H1 (cell line): ENCODE measurements at regions of chr10 and their contacts with region 1.

Region 1: DNA sequence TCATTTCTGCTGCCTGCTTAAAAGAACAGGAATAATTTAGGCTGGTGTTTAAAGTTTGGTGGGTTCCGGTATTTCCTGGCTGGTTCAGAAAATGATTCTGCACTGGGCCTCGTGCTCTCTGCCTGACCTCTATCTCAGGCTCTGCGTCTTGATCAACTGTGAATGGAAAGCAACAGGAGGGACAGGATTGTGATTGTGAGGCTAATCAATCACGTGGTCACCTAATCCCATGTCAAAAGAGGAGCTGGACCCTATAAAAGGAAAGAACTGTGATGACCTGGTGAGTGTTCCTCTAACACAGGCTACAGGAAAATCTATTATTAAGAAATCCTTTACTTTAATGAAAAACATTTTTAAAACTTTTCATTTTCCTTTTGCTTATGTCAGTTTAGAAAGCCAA is at the start of gene DHX32:
- DNase-seq: no peak
- H3K4me3 ChIP-seq: peak within 1 kb of the TSS in 2 of 4 experiments; percentile 20 to 47; a peak in 4 of 8 replicates
- H3K27ac ChIP-seq: no peak within 1 kb of the TSS; the same call in 1 of the 2 replicates
- H3K4me1 ChIP-seq: peaks cover 2 to 19% (median 7%) of the 10 kb centered on the region in 4 experiments
- H3K27me3 ChIP-seq: no peaks in the 10 kb centered on the region; a peak in 1 of 7 replicates
- CTCF ChIP-seq: no peak
- EP300 ChIP-seq: peak in 1 of 2 experiments; percentile 57; a peak in 1 of 3 replicates
- POLR2A ChIP-seq: no peak
- RAD21 ChIP-seq: no peak
- total RNA-seq, gene DHX32: 15.6 and 15.8 TPM in 2 replicates

Region 2: GRCh38 chr10:125559210-125559609 is 322.0 kb before region 1 on chr10:
- CTCF ChIA-PET with region 1: no interaction called
- POLR2A ChIA-PET with region 1: no interaction called
- DNase-seq: no peak
- H3K4me3 ChIP-seq: no peak overlapping the region
- H3K27ac ChIP-seq: no peak overlapping the region
- H3K4me1 ChIP-seq: no peaks in the 10 kb centered on the region
- H3K27me3 ChIP-seq: no peaks in the 10 kb centered on the region
- CTCF ChIP-seq: no peak
- EP300 ChIP-seq: no peak
- POLR2A ChIP-seq: no peak
- RAD21 ChIP-seq: no peak

Region 3: GRCh38 chr10:125850766-125851731 is 30.1 kb before region 1 on chr10:
- CTCF ChIA-PET with region 1: no interaction called
- POLR2A ChIA-PET with region 1: no interaction called
- DNase-seq: no peak
- H3K4me3 ChIP-seq: no peak overlapping the region
- H3K27ac ChIP-seq: no peak overlapping the region
- H3K4me1 ChIP-seq: no peaks in the 10 kb centered on the region
- H3K27me3 ChIP-seq: no peaks in the 10 kb centered on the region
- CTCF ChIP-seq: no peak
- EP300 ChIP-seq: no peak
- POLR2A ChIP-seq: no peak
- RAD21 ChIP-seq: no peak

Region 4: DNA sequence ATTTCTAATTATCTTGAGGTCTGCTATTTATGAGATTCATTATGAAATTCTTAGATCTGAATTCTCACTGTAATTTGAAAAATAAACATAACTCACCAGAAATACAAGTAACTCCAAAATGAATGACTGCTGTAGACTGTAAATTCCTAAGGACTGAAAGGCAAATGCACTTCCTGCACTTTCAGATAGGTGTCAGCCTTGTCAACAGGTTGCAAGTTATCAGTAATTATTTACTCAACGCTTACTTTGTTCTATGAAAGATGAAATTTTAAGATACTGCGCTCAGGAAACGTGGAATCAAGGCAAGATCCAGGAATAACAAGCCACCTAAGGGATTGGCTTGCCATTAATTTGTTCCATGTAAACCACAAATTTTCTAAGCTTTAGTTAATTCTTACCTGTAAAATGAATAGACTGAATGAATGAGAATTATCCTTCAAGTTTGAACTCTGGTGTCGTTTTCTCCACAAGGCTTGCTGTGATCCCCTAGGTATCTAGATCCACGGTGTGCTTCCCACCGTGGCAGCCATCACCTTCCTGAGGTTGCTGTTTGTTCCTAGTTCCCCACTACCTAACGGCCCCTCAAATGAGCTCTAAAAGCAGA is 12.7 kb before region 1 on chr10:
- CTCF ChIA-PET with region 1: interaction called, 16 read pairs
- POLR2A ChIA-PET with region 1: interaction called, 3 read pairs
- DNase-seq: no peak
- H3K4me3 ChIP-seq: no peak overlapping the region
- H3K27ac ChIP-seq: no peak overlapping the region
- H3K4me1 ChIP-seq: no peaks in the 10 kb centered on the region
- H3K27me3 ChIP-seq: no peaks in the 10 kb centered on the region
- CTCF ChIP-seq: peak in 2 of 3 experiments; percentile 53 to 85; a peak in 3 of 4 replicates
- EP300 ChIP-seq: no peak
- POLR2A ChIP-seq: no peak
- RAD21 ChIP-seq: peak; percentile 86 to 88

Region 5: DNA sequence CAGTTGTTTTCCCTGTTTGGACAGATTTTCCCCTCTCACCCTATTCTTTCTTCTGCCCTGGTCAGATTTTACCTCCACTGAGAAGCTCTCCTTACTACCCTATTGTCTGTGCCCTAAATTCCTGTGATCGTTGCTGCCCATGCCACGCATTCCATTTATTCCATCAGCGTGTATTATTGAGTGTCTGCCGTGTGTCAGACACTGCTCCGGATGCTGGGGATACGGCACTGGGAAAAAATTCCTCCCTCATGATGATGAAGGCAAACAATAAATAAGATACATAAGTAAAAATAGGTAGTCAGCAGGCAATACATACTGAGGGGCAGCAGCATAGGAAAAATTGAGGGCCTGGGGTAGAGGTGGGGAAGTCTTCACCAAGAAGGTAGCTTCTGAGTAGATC is 102.0 kb after region 1 on chr10:
- CTCF ChIA-PET with region 1: no interaction called
- POLR2A ChIA-PET with region 1: no interaction called
- DNase-seq: no peak
- H3K4me3 ChIP-seq: no peak overlapping the region
- H3K27ac ChIP-seq: no peak overlapping the region
- H3K4me1 ChIP-seq: peaks cover 0 to 15% (median 1%) of the 10 kb centered on the region in 4 experiments; a peak in 3 of 7 replicates
- H3K27me3 ChIP-seq: no peaks in the 10 kb centered on the region
- CTCF ChIP-seq: no peak
- EP300 ChIP-seq: no peak
- POLR2A ChIP-seq: no peak
- RAD21 ChIP-seq: no peak